OCI-LY7 (cell line): ENCODE measurements at regions of chr1 and their contacts with region 1.

Region 1: DNA sequence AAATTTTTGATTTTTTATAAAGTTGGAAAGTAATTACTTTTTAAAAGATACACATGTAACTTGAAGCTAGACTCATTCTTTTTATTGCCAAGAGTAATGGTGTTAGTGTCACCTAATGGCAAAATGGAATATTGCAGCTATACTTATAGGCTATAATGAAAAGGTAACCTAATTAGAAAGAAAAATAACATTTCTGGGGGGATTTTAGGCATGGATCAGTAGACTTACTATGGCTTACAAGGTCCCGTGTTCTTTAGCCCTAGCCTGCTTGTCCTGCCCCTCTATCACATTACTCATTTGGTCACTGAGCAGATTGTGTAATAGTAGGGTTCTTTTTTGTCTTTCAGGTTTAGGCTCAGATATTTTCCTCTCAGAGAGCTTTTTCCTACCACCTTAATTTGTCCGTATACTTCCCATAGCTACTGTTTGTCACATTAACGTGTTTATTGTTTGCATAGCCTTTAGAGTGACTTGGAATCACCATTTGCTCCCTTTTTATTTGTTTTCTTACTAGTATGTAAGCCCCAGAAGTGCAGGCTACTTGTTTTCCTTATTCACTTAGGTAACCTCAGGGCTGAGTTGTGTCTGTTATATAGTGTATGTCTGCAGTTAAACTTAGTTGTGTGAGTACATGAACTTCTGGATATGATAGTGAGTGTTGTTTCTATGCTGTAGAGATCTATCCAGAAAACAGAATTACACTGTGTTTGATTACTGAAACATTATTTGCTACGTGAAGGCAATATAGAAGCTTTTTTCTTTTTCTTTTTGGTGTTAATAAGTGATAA is 58.7 kb downstream of the RABGAP1L start:
- DNase-seq: peak; percentile 63
- H3K4me3 ChIP-seq: no peak overlapping the region
- H3K27ac ChIP-seq: peak overlapping the region; percentile 51
- H3K4me1 ChIP-seq: peaks cover 28% of the 10 kb centered on the region
- CTCF ChIP-seq: peak; percentile 98

Region 2: GRCh38 chr1:173714759-173715537 is 503.0 kb before region 1 on chr1 and contains the start of gene KLHL20:
- CTCF ChIA-PET with region 1: no interaction called
- POLR2A ChIA-PET with region 1: no interaction called
- intact Hi-C with region 1: loop called (anchors 10 kb)
- DNase-seq: peak; percentile 94
- H3K4me3 ChIP-seq: peak within 1 kb of the TSS; percentile 78
- H3K27ac ChIP-seq: peak within 1 kb of the TSS; percentile 77
- H3K4me1 ChIP-seq: peaks cover 23% of the 10 kb centered on the region
- CTCF ChIP-seq: 0 out of 2 replicates have a peak, but pooled peaks have one; percentile 38
- total RNA-seq, gene KLHL20: 17.5 and 28.2 TPM in 2 replicates

Region 3: DNA sequence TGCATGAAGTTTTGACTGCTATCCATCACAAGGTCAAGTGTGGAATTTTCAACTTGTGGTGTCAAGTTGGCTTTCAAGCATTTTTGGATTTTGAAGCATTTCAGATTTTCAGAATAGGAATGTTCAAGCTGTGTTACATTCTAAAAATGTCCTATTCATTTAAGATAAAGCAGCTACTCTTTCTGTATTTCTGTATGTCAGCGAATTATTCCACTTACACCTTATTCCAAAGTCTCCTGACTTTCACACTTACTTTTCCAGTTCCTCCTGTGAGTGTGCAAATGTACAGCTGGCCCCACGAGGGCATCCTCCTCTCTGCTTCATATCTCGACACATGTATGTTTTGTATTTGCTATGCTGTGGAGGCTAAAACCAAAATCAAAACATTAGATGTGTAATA is 247.7 kb before region 1 on chr1:
- CTCF ChIA-PET with region 1: no interaction called
- POLR2A ChIA-PET with region 1: no interaction called
- intact Hi-C with region 1: loop called (anchors 10 kb)
- DNase-seq: no peak
- H3K4me3 ChIP-seq: no peak overlapping the region
- H3K27ac ChIP-seq: no peak overlapping the region
- H3K4me1 ChIP-seq: no peaks in the 10 kb centered on the region
- CTCF ChIP-seq: no peak

Region 4: GRCh38 chr1:174097426-174097825 is 120.6 kb before region 1 on chr1:
- CTCF ChIA-PET with region 1: no interaction called
- POLR2A ChIA-PET with region 1: interaction called, 4 read pairs
- intact Hi-C with region 1: loop called (anchors 2 kb)
- DNase-seq: no peak
- H3K4me3 ChIP-seq: no peak overlapping the region
- H3K27ac ChIP-seq: no peak overlapping the region
- H3K4me1 ChIP-seq: no peaks in the 10 kb centered on the region
- CTCF ChIP-seq: no peak

Region 5: DNA sequence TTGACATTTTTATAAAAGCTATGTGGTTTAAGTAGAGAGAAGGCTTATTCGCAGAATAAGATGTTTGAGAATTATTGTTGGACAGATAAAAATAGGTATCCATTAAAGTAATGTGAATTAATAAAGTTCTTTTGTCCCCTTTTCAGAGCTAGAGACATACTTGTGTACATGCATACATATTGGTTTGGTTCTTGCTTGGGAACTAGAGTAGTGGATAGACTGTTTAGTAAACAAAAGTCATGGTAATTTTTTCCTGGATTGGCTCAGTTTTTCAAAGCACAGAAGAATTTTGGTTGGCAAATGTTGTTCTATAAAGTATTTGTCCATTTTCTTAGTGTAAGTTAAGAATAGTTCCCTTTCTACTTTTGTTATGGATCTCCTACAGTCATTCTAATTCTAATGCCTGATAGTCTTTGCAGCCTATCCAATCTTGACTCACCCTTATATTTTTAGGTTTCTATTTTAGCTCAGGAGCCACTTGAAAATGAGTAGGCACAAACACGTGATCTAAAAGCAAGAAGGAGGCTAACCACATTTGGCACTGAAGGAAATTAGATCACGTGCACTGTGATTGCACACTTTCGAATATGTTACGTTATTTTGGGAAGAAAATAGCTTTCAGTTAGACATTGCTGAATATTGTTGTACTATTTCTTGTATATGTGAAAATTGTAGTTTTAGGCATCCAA is 11.7 kb before region 1 on chr1:
- CTCF ChIA-PET with region 1: no interaction called
- POLR2A ChIA-PET with region 1: interaction called, 14 read pairs
- intact Hi-C with region 1: no loop called
- DNase-seq: no peak
- H3K4me3 ChIP-seq: no peak overlapping the region
- H3K27ac ChIP-seq: no peak overlapping the region
- H3K4me1 ChIP-seq: no peaks in the 10 kb centered on the region
- CTCF ChIP-seq: no peak

Region 6: DNA sequence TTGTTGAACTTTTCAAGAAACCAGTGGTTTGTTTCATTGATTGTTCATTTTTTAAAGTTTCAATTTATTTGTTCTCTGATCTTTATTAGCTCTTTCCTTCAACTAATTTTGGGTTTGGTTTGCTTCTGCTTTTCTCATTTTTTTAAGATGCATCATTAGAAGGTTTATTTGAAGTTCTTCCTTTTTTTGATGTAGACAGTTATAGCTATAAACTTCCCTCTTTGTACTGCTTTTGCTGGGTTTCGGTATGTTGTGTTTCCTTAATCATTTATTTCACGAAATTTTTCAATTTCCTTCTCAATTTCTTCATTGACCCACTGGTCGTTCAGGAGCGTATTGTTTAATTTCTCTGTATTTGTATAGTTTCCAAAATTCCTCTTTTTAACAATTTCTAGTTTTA is 96.5 kb after region 1 on chr1:
- CTCF ChIA-PET with region 1: no interaction called
- POLR2A ChIA-PET with region 1: no interaction called
- intact Hi-C with region 1: no loop called
- DNase-seq: no peak
- H3K4me3 ChIP-seq: no peak overlapping the region
- H3K27ac ChIP-seq: no peak overlapping the region
- H3K4me1 ChIP-seq: no peaks in the 10 kb centered on the region
- CTCF ChIP-seq: no peak